Naive thymus-derived CD4-positive, alpha-beta T cell (primary cell): ENCODE measurements at regions of chr6 and their contacts with region 1.

Region 1: DNA sequence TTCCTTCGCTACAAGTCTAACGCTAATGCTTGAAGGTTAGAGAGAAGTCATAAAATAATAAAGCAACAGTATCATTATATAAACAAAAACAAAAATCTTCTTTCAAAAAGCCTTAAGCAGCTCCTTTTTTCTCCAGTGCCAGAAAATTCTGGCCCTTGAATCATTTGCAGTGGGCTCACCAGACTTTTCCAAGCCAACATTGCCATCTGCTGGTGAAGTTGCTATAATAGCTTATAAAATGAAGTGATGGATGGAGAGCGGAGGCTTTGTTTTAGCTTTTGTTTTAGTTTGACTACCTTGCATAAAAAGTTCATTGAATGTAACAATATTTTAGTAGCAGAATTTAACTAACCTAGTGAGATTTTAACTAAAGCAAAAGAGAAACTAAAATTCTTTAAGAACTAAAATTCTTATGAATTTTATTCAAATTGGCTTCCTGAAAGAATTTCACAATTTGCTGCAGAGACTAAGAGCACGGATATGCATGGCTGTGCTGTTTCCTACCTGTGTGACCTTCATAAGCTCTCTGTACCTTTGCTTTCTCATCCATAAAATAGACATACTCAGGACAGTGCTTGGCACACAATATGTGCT is 44.8 kb upstream of the SLC2A12 start:
- DNase-seq: peak in 8 of 9 donors; percentile 26 to 70 (median 54)
- ATAC-seq: peak; percentile 68
- H3K4me3 ChIP-seq: no peak overlapping the region
- H3K4me3 Mint-ChIP-seq: no peak overlapping the region
- H3K27ac ChIP-seq: no peak overlapping the region
- H3K27ac Mint-ChIP-seq: no peak overlapping the region
- H3K4me1 ChIP-seq: no peaks in the 10 kb centered on the region
- H3K4me1 Mint-ChIP-seq: peaks cover 0 to 6% (median 0%) of the 10 kb centered on the region in 7 donors
- H3K27me3 ChIP-seq: peaks cover 0 to 3% of the 10 kb centered on the region in 2 donors
- H3K27me3 Mint-ChIP-seq: peaks cover 13 to 31% (median 20%) of the 10 kb centered on the region in 5 donors

Region 2: DNA sequence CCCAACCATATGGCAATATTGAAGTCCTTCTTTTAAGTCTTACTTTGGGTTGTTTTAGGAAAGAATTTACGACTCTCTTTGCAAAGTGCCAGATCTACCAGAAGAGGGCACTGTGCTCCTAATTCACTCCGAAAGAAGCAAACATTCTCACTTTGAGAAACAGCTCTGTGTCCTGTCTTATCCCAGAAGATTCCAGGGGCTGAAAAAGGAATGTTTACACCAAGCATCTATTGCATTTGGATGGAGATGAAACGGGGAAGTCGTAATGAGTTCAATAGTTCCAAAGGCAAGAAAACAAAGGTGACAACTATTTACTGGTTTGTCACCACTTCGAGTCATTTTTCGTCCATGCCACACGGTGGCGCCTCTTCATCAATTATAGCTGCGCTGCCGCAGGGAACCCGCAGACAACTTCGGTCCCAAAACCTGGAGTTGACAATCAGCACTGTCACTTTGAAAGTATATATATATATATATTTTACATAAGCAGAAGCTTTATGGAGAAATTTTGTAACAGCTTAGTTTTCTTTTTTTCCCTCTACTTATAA is 1817.5 kb before region 1 on chr6:
- CTCF ChIA-PET with region 1: no interaction called
- POLR2A ChIA-PET with region 1: no interaction called
- intact Hi-C with region 1: loop called in 1 of 2 experiments (anchors 1 kb)
- DNase-seq: peak; percentile 43 to 79 (median 71)
- ATAC-seq: peak; percentile 89
- H3K4me3 ChIP-seq: peak overlapping the region; percentile 63
- H3K4me3 Mint-ChIP-seq: peak overlapping the region in 9 of 10 donors; percentile 56 to 89 (median 84)
- H3K27ac ChIP-seq: no peak overlapping the region
- H3K27ac Mint-ChIP-seq: no peak overlapping the region
- H3K4me1 ChIP-seq: no peaks in the 10 kb centered on the region
- H3K4me1 Mint-ChIP-seq: no peaks in the 10 kb centered on the region
- H3K27me3 ChIP-seq: no peaks in the 10 kb centered on the region
- H3K27me3 Mint-ChIP-seq: peaks cover 19 to 38% (median 27%) of the 10 kb centered on the region in 5 donors

Region 3: DNA sequence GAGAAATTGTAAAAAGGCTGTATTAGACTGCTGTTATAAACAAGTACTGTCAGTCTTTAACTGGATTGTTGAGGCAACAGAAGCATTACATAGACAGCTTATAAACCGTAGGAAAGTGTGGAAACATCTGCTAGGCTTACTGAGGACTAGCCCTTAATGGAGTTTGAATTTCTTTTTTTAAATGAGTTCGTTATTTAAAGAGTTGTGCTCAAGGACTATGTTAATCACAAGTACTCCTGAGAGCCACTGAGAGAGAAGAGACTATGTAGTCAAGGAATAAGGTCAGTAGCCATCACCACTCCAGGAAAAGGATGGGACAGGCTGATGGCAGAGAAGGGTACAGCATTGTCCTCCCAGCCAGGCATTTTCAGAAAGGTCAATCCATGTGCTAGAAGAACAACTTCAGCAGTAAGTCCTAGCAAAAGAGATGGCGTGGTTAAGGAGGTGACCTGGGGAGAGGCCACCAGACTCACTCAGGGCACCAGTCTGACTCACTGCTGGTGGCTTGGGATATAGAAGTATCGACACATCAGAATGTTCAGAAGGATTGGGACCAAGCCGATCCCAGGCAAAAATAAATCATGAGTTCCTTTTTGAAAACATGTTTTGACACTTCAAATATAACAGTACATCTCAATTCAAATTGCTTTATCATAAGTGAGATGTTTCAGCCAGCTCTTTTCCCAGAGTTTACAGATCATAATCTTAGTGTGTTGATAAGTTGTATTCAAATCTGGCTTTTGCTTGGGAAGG is 1276.4 kb before region 1 on chr6:
- CTCF ChIA-PET with region 1: no interaction called
- POLR2A ChIA-PET with region 1: no interaction called
- intact Hi-C with region 1: loop called in 1 of 2 experiments (anchors 5 kb)
- DNase-seq: no peak
- ATAC-seq: peak; percentile 21
- H3K4me3 ChIP-seq: no peak overlapping the region
- H3K4me3 Mint-ChIP-seq: no peak overlapping the region
- H3K27ac ChIP-seq: peak overlapping the region; percentile 17
- H3K27ac Mint-ChIP-seq: peak overlapping the region in 8 of 9 donors; percentile 55 to 88 (median 86)
- H3K4me1 ChIP-seq: peaks cover 14 to 18% of the 10 kb centered on the region in 2 donors
- H3K4me1 Mint-ChIP-seq: peaks cover 28 to 64% (median 59%) of the 10 kb centered on the region in 7 donors
- H3K27me3 ChIP-seq: no peaks in the 10 kb centered on the region
- H3K27me3 Mint-ChIP-seq: peaks cover 0 to 2% (median 0%) of the 10 kb centered on the region in 5 donors

Region 4: DNA sequence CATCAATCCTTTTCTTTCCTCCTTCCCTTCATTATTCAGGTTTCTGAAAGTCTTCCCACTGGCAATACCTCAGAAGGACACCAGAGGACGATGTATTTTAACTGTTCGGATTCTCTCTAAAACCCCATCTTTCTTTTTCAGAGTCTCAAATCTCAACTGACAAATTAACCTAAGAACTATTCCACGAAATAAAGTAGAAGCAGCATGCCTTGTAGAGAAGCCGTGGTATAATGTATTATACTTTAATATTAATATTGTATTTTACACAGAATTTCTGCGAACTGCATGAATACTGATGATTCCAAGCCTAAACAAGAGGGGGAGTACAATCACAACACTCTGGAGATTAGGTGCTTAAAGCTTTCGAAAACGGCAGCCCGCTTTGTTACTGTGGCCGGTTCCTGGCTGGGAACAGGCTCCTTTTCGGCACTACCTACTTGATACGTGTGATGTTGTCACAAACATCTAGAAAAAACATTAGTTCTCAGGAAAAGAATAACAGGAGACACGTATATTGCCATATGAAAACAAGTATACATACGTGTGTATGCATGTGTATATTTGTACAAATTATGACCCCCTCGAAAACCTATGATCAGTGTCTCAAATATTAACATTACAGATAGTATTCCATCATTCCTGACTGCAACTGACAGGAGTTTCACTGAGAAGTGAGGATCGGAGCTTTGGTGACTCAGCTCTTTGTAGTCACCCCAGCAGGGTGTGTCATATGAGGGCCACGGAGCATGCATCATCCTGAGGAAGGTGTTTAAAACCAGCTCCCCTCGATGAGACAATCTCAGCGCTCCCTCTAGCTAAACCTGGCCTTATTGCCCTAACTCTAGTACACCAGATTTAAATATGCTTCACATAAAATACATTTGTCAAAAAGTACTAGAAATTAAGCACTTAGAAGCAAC is 528.0 kb before region 1 on chr6:
- CTCF ChIA-PET with region 1: no interaction called
- POLR2A ChIA-PET with region 1: no interaction called
- intact Hi-C with region 1: loop called in 1 of 2 experiments (anchors 2 kb)
- DNase-seq: no peak
- ATAC-seq: no peak
- H3K4me3 ChIP-seq: no peak overlapping the region
- H3K4me3 Mint-ChIP-seq: peak overlapping the region; percentile 47 to 77 (median 62)
- H3K27ac ChIP-seq: no peak overlapping the region
- H3K27ac Mint-ChIP-seq: no peak overlapping the region
- H3K4me1 ChIP-seq: no peaks in the 10 kb centered on the region
- H3K4me1 Mint-ChIP-seq: peaks cover 0 to 8% (median 6%) of the 10 kb centered on the region in 7 donors
- H3K27me3 ChIP-seq: no peaks in the 10 kb centered on the region
- H3K27me3 Mint-ChIP-seq: peaks cover 14 to 54% (median 47%) of the 10 kb centered on the region in 5 donors

Region 5: GRCh38 chr6:133837801-133838349 is 259.3 kb before region 1 on chr6:
- CTCF ChIA-PET with region 1: interaction called, 10 read pairs
- POLR2A ChIA-PET with region 1: no interaction called
- intact Hi-C with region 1: loop called (anchors 1 to 2 kb)
- DNase-seq: peak; percentile 11 to 67 (median 43)
- ATAC-seq: peak; percentile 76
- H3K4me3 ChIP-seq: peak overlapping the region; percentile 21
- H3K4me3 Mint-ChIP-seq: peak overlapping the region; percentile 46 to 84 (median 70)
- H3K27ac ChIP-seq: no peak overlapping the region
- H3K27ac Mint-ChIP-seq: no peak overlapping the region
- H3K4me1 ChIP-seq: peaks cover 0 to 6% of the 10 kb centered on the region in 2 donors
- H3K4me1 Mint-ChIP-seq: peaks cover 0 to 10% (median 7%) of the 10 kb centered on the region in 7 donors
- H3K27me3 ChIP-seq: no peaks in the 10 kb centered on the region
- H3K27me3 Mint-ChIP-seq: peaks cover 10 to 48% (median 41%) of the 10 kb centered on the region in 5 donors

Region 6: DNA sequence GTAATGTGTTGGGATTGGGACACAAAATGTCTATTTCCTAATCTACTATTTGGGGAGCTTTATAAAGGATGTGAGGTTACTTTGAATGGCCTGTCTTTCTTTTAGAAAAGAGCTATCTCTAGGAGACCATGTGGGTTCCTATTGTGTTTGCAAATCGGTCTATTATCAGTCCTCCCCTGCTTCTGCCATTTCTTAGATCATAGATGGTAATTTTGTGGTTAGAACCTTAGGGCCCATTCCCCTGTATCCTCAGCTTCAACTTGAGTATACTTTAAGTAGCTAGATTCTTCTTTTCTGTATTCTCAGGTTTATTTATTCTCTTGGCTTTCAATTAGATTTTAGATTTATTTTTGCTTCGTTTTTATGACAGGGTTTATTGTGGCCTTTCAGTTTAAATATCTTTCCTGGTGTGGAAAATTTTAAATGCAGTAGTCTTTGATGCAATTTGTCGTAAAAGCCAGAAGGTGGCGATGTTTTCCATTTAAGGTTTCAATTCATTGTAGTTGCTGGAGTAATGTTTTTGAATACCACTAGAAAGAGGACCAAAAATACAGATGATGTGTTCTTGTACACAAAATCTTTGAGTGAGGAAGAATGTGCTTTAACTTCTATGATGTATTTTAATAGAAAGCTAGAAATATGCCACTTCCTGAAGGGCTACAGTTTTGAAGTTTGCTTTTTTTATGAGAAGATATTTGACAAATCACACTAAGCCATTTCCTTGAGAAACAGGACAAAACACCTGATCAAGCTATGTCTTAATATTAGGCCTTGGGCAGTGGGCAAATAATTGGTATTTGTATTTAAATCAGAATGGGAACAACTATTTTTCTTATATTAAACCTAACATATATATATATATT is 123.9 kb before region 1 on chr6:
- CTCF ChIA-PET with region 1: interaction called, 17 read pairs
- POLR2A ChIA-PET with region 1: no interaction called
- intact Hi-C with region 1: loop called (anchors 1 kb)
- DNase-seq: peak in 7 of 9 donors; percentile 16 to 53 (median 43)
- ATAC-seq: peak; percentile 79
- H3K4me3 ChIP-seq: no peak overlapping the region
- H3K4me3 Mint-ChIP-seq: no peak overlapping the region
- H3K27ac ChIP-seq: no peak overlapping the region
- H3K27ac Mint-ChIP-seq: peak overlapping the region in 2 of 9 donors; percentile 45 to 79
- H3K4me1 ChIP-seq: peaks cover 0 to 6% of the 10 kb centered on the region in 2 donors
- H3K4me1 Mint-ChIP-seq: peaks cover 16 to 67% (median 59%) of the 10 kb centered on the region in 7 donors
- H3K27me3 ChIP-seq: no peaks in the 10 kb centered on the region
- H3K27me3 Mint-ChIP-seq: no peaks in the 10 kb centered on the region

Region 7: DNA sequence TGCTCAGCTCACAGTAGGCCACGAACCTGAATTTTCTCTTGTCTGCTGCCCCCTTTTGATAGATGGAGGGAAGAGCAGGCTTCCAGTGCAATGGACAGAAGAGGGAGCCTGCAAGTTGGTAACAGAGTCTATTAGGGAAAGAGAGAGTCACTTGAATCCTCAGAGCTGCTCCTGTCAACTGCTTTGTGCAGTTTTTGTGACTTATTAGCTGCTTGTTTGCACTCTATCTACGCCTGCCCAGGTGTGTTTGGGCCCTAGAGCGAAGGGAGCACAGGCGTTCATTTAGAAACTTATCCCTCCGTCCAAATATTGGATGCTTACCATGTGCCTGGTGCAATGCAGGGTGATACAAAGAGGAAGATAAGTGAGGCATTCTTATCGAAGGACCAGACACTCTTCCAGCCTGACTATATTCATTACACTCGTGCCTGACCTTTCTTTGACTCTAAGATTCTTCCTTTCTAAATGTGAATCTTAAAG is 33.2 kb before region 1 on chr6:
- CTCF ChIA-PET with region 1: interaction called, 4 read pairs
- POLR2A ChIA-PET with region 1: no interaction called
- intact Hi-C with region 1: loop called (anchors 1 kb)
- DNase-seq: peak; percentile 13 to 72 (median 56)
- ATAC-seq: peak; percentile 92
- H3K4me3 ChIP-seq: no peak overlapping the region
- H3K4me3 Mint-ChIP-seq: no peak overlapping the region
- H3K27ac ChIP-seq: no peak overlapping the region
- H3K27ac Mint-ChIP-seq: peak overlapping the region in 1 of 9 donors; percentile 36
- H3K4me1 ChIP-seq: no peaks in the 10 kb centered on the region
- H3K4me1 Mint-ChIP-seq: peaks cover 0 to 7% (median 0%) of the 10 kb centered on the region in 7 donors
- H3K27me3 ChIP-seq: no peaks in the 10 kb centered on the region
- H3K27me3 Mint-ChIP-seq: peaks cover 0 to 8% (median 0%) of the 10 kb centered on the region in 5 donors

Region 8: DNA sequence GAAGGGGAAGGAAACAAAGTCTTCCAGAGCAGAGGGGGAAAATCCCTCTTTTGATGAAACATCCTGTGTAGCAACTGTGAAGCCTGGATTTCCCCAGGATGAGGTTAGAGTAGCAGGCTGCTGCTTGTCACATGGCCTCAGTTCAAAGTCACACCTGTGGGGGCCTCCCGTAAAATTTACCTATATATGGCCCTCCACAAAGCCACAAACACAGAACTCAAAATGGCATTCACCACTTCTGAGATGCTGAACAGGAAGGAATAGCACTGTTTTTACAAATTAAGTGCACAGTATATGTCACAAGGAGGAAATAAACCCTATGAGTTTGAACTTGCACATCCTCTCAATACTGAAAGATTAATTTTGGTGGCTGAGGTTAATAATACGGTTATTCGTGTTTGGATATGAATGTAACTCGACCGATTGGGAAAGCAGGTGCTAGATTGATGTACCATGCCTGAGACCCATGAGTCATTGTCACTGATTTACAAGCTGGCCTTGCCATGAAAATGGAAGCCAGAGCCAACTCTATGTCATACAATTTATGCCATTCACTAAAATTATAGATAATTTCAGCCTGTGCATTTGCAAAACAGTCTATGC is 150.1 kb after region 1 on chr6:
- CTCF ChIA-PET with region 1: no interaction called
- POLR2A ChIA-PET with region 1: no interaction called
- intact Hi-C with region 1: no loop called
- DNase-seq: peak in 8 of 9 donors; percentile 67 to 96 (median 93)
- ATAC-seq: peak; percentile 97
- H3K4me3 ChIP-seq: peak overlapping the region; percentile 21
- H3K4me3 Mint-ChIP-seq: peak overlapping the region; percentile 50 to 84 (median 75)
- H3K27ac ChIP-seq: peak overlapping the region; percentile 77
- H3K27ac Mint-ChIP-seq: peak overlapping the region; percentile 83 to 99 (median 94)
- H3K4me1 ChIP-seq: peaks cover 34 to 60% of the 10 kb centered on the region in 2 donors
- H3K4me1 Mint-ChIP-seq: peaks cover 30 to 75% (median 63%) of the 10 kb centered on the region in 7 donors
- H3K27me3 ChIP-seq: no peaks in the 10 kb centered on the region
- H3K27me3 Mint-ChIP-seq: no peaks in the 10 kb centered on the region